Adrenal gland (tissue), 19 donors: ENCODE measurements at regions of chr2 and their contacts with region 1.

Region 1: GRCh38 chr2:20661067-20661980 is 5.6 kb upstream of the GDF7 start:
- DNase-seq: peak; percentile 50 to 87 (median 65)
- H3K4me3 ChIP-seq: no peak overlapping the region
- H3K27ac ChIP-seq: no peak overlapping the region
- H3K4me1 ChIP-seq: peaks cover 9 to 10% of the 10 kb centered on the region in 2 donors
- H3K27me3 ChIP-seq: peaks cover 40% of the 10 kb centered on the region
- CTCF ChIP-seq: peak; percentile 90 to 98 (median 95)
- POLR2A ChIP-seq: no peak

Region 2: GRCh38 chr2:20524412-20525040 is 136.8 kb before region 1 on chr2:
- intact Hi-C with region 1: no loop called
- DNase-seq: peak in 6 of 7 donors; percentile 32 to 77 (median 52)
- H3K4me3 ChIP-seq: no peak overlapping the region
- H3K27ac ChIP-seq: peak overlapping the region in 3 of 5 donors; percentile 26 to 80 (median 68)
- H3K4me1 ChIP-seq: peaks cover 0 to 8% of the 10 kb centered on the region in 2 donors
- H3K27me3 ChIP-seq: no peaks in the 10 kb centered on the region
- CTCF ChIP-seq: peak in 1 of 6 experiments; percentile 1
- POLR2A ChIP-seq: no peak

Region 3: DNA sequence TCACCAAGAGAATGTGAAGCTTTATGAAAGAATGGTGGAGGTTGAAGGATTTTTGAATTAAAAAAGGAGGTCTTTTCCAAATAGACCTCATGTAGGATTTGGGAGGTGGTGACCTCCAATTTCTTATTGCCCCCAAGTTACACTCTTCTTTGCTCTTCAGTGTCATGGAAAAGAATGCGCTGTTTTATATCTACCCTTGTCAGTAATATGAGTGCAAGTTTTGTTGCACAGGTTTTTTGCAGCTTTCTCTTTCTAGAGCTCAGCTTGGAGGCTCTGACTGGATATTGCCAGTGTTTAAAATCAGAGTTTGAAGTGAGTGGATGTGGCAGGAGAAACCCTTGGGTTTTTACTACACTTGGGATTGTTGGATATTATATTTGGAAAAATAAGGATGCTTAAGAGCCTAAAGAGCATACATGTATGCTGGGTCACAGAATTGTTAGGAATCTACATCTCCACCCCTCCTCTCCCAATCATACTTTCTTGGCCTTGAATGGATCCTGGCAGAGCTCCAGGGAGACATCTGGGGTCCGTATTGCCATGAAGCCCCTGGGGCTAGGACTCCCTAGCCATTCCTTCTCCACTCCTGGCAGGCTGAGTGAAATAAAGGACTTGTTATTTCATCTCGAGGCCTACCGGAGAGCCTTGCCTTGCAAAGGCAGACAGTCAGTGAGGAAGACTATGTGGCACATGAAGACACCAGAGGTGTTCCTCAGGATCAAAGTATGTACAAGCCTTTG is 338.8 kb after region 1 on chr2:
- intact Hi-C with region 1: no loop called
- DNase-seq: no peak
- H3K4me3 ChIP-seq: no peak overlapping the region
- H3K27ac ChIP-seq: no peak overlapping the region
- H3K4me1 ChIP-seq: no peaks in the 10 kb centered on the region
- H3K27me3 ChIP-seq: peaks cover 6% of the 10 kb centered on the region
- CTCF ChIP-seq: no peak
- POLR2A ChIP-seq: no peak

Region 4: DNA sequence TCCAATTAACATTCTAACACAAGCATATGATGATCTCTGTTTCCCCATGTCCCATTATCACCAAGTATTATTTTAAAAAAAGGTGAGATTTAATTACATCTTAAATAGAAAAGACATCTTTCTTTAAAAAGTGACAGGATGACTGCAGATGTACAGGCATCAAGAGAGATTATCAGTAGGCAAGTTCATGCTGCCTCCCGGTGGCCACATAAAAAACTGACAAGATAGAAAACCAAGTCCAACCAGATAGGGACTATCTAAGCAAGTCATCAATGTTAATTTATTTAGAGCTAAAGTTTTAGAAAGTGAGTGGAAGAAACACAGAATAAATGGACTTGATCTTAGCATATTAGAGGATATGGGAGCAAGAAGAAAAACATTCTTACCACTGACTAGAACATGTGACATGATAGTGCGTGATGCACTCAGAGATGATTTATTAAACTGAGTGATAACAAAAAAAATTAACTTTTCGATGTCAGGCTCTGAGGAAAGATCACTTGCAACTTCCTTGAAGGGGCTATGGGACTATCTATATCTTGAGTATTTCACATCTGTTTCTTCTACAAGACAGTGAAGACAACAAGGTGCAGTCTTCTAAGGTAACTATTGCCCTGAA is 457.1 kb after region 1 on chr2:
- intact Hi-C with region 1: loop called in 1 of 2 experiments (anchors 5 kb)
- DNase-seq: peak in 6 of 7 donors; percentile 19 to 65 (median 40)
- H3K4me3 ChIP-seq: no peak overlapping the region
- H3K27ac ChIP-seq: no peak overlapping the region
- H3K4me1 ChIP-seq: no peaks in the 10 kb centered on the region
- H3K27me3 ChIP-seq: no peaks in the 10 kb centered on the region
- CTCF ChIP-seq: peak; percentile 25 to 60 (median 49)
- POLR2A ChIP-seq: no peak